Vagina (tissue), 2 donors: ENCODE measurements at regions of chr13 and their contacts with region 1.

Region 1: DNA sequence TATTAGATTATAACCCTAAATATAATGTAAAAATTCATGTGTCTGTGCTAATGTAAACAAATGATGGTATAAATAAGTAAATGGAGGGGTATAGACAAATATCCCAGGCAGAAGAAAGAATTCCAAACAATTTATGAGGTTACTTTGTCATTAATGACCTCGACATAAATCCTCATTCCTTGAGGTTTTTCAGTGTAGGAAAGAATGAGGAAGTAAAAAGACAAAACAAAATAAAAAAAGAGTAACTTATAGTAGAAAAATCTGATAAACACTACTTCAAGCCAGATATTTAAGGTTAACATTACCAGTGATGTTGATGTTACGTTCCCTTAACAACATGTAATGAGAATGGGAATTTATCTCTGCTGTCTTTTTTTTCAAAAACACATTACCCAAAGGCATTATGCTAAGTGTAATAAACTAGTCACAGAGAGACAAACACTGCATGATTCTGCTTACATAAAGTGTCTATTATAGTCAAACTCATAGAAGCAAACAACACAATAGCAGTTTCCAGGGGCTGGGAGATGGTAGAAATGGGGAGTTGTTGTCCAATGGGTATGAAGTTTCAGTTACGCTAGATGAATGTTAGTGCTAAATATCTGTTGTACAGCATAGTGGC is 935.1 kb downstream of the SLITRK1 start:
- DNase-seq: no peak
- H3K4me3 ChIP-seq: no peak overlapping the region
- H3K27ac ChIP-seq: no peak overlapping the region
- H3K4me1 ChIP-seq: no peaks in the 10 kb centered on the region
- H3K27me3 ChIP-seq: no peaks in the 10 kb centered on the region
- CTCF ChIP-seq: no peak
- POLR2A ChIP-seq: no peak

Region 2: DNA sequence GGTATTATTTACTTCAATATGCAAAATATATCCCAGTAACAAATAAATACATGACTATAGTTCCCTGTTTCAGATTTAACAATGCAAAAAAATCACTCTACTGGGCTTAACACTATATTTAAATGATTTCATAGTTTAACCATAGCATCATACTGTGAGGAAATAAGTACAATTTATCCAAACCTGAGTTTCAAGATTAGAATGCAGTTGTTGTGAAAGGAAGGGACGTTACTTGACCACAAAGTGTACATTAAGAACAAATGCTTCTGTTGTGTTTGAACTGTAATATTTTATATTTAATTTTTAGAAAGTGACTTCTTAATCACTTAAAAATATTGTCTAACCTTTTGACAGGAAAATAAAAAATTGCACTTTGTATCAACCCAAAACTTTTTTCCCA is 858.4 kb before region 1 on chr13:
- intact Hi-C with region 1: no loop called
- DNase-seq: no peak
- H3K4me3 ChIP-seq: no peak overlapping the region
- H3K27ac ChIP-seq: no peak overlapping the region
- H3K4me1 ChIP-seq: no peaks in the 10 kb centered on the region
- H3K27me3 ChIP-seq: no peaks in the 10 kb centered on the region
- CTCF ChIP-seq: no peak
- POLR2A ChIP-seq: no peak

Region 3: DNA sequence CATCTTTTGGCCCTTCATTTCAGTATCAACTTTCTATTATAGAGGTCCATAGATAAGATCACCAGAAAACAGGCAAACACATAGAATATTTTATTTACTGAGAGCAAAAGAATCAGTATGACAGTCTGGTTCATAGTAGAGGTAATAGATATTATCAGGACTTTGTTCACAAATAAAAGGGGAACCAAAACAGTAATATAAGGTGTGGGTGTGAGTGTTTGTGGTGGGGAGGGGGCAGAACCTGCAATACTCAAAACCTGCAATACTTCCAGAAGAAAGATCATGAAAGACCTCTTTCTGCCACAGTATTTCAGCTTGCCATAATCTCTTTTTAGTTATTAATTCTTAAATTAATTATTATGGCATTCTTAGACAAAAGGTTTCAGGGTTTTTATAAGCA is 1513.8 kb after region 1 on chr13:
- intact Hi-C with region 1: loop called (anchors 5 kb)
- DNase-seq: no peak
- H3K4me3 ChIP-seq: no peak overlapping the region
- H3K27ac ChIP-seq: no peak overlapping the region
- H3K4me1 ChIP-seq: no peaks in the 10 kb centered on the region
- H3K27me3 ChIP-seq: no peaks in the 10 kb centered on the region
- CTCF ChIP-seq: no peak
- POLR2A ChIP-seq: no peak